Left ventricle myocardium superior (tissue), 1 donor: ENCODE measurements at regions of chr3 and their contacts with region 1.

Region 1: GRCh38 chr3:77038468-77038929 is 1.4 kb upstream of the ROBO2 start:
- DNase-seq: peak; percentile 58
- ATAC-seq: peak; percentile 95

Region 2: GRCh38 chr3:76096036-76096435 is 942.5 kb before region 1 on chr3:
- intact Hi-C with region 1: no loop called
- DNase-seq: no peak
- ATAC-seq: no peak

Region 3: GRCh38 chr3:77254967-77255831 is 216.7 kb after region 1 on chr3:
- intact Hi-C with region 1: loop called (anchors 5 kb)
- DNase-seq: no peak
- ATAC-seq: peak; percentile 54

Region 4: GRCh38 chr3:78645628-78646310 is 1607.3 kb after region 1 on chr3:
- intact Hi-C with region 1: loop called (anchors 2 kb)
- DNase-seq: no peak
- ATAC-seq: peak; percentile 31